Mucosa of descending colon (tissue), 3 donors: ENCODE measurements at regions of chr6 and their contacts with region 1.

Region 1: GRCh38 chr6:130322673-130323268 is 43.0 kb upstream of the TMEM200A start:
- DNase-seq: peak in 2 of 3 donors; percentile 31 to 72
- ATAC-seq: peak; percentile 77
- H3K4me3 ChIP-seq: no peak overlapping the region
- H3K4me1 ChIP-seq: no peaks in the 10 kb centered on the region
- CTCF ChIP-seq: peak; percentile 77

Region 2: GRCh38 chr6:129835691-129836090 is 487.1 kb before region 1 on chr6:
- intact Hi-C with region 1: no loop called
- DNase-seq: no peak
- ATAC-seq: no peak
- H3K4me3 ChIP-seq: no peak overlapping the region
- H3K4me1 ChIP-seq: no peaks in the 10 kb centered on the region
- CTCF ChIP-seq: no peak

Region 3: GRCh38 chr6:130697995-130698535 is 375.3 kb after region 1 on chr6:
- intact Hi-C with region 1: loop called in 1 of 2 experiments (anchors 2 kb)
- DNase-seq: peak in 2 of 3 donors; percentile 32 to 71
- ATAC-seq: peak; percentile 73
- H3K4me3 ChIP-seq: no peak overlapping the region
- H3K4me1 ChIP-seq: no peaks in the 10 kb centered on the region
- CTCF ChIP-seq: no peak

Region 4: DNA sequence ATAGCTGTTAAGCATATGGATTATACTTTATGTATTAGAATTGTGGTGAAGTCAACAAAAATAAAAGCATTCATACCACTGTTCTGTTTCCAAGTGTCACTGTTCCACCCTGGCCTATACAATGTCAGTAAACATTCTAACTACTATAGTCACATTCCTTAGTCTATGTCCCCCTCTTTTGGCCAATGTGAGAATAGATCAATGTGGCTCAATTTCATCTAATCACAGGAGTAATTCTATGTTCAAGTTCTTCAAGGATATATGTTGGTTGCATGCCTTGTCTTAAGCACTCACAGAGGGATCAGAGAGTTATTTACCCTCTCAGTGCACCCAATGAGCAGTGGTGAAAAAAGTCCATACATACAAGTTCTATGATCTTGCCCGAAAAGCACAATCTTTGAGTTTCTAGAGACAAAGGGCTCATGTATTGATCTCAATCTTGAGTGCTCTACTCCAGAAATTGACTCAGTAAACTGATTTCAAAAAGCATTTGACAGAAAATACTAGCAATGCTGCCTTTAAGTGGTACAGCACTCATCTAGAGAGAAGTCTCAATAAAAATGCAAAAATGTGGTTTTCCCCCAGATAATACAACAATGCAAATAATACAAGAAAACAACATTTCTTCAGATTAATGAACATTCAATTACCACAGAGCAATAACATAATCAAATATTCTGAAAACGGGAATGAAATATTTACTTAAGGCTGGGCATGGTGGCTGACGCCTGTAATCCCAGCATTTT is 521.0 kb after region 1 on chr6:
- intact Hi-C with region 1: loop called in 1 of 2 experiments (anchors 10 kb)
- DNase-seq: peak in 1 of 3 donors; percentile 21
- ATAC-seq: peak; percentile 66
- H3K4me3 ChIP-seq: no peak overlapping the region
- H3K4me1 ChIP-seq: no peaks in the 10 kb centered on the region
- CTCF ChIP-seq: no peak

Region 5: GRCh38 chr6:130872250-130873095 is 549.7 kb after region 1 on chr6:
- intact Hi-C with region 1: loop called in 1 of 2 experiments (anchors 10 kb)
- DNase-seq: peak; percentile 56 to 89 (median 79)
- ATAC-seq: peak; percentile 76
- H3K4me3 ChIP-seq: no peak overlapping the region
- H3K4me1 ChIP-seq: no peaks in the 10 kb centered on the region
- CTCF ChIP-seq: peak; percentile 74